ENCODE measurements at regions of chr20 and their contacts with region 1.

Region 1: DNA sequence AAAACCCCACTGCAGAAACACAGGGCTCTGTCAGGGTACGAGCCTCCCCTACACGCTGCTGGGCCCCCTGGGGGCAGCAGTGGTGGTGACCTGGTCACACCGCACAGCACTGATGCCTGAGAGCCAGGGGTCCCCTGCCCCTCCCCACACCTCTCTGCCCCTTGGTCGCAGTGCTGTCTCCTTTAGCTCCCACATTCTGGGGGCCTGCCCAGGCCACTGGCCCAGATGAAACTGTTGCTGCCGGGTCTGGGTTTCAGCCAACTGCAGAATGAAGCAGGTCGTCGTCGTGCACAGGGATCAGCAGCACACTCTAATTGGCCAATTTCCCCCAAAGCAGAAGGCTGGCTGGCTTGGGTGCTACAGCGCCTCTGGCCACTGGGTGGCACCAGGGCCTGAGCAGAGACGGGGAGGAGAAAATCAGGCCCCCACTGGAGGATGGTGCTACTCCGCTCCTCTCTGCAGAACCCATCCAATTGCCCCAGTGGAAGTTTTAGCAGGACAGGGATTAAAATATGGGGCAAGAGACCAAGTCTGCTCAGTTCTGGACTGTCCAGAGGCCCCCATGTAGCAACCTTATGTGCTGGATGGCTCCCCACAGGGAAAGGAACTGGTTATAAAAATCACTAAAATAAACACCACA is 26.1 kb downstream of the DIDO1 start:
- DNase-seq: peak; percentile 75
- H3K4me3 ChIP-seq: no peak overlapping the region
- H3K27ac ChIP-seq: peak overlapping the region; percentile 38
- H3K4me1 ChIP-seq: peaks cover 15% of the 10 kb centered on the region
- CTCF ChIP-seq: peak; percentile 84

Region 2: GRCh38 chr20:62437927-62438326 is 462.2 kb before region 1 on chr20:
- CTCF ChIA-PET with region 1: no interaction called
- POLR2A ChIA-PET with region 1: no interaction called
- intact Hi-C with region 1: no loop called
- DNase-seq: no peak
- H3K4me3 ChIP-seq: no peak overlapping the region
- H3K27ac ChIP-seq: no peak overlapping the region
- H3K4me1 ChIP-seq: no peaks in the 10 kb centered on the region
- CTCF ChIP-seq: no peak

Region 3: GRCh38 chr20:62822788-62823651 is 77.2 kb before region 1 on chr20:
- CTCF ChIA-PET with region 1: no interaction called
- POLR2A ChIA-PET with region 1: no interaction called
- intact Hi-C with region 1: loop called (anchors 2 kb)
- DNase-seq: peak; percentile 87
- H3K4me3 ChIP-seq: no peak overlapping the region
- H3K27ac ChIP-seq: no peak overlapping the region
- H3K4me1 ChIP-seq: peaks cover 7% of the 10 kb centered on the region
- CTCF ChIP-seq: peak; percentile 88

Region 4: GRCh38 chr20:62918831-62919230 is 18.7 kb after region 1 on chr20:
- CTCF ChIA-PET with region 1: no interaction called
- POLR2A ChIA-PET with region 1: interaction called, 5 read pairs
- intact Hi-C with region 1: loop called (anchors 1 kb)
- DNase-seq: peak; percentile 52
- H3K4me3 ChIP-seq: peak overlapping the region; percentile 48
- H3K27ac ChIP-seq: peak overlapping the region; percentile 61
- H3K4me1 ChIP-seq: peaks cover 86% of the 10 kb centered on the region
- CTCF ChIP-seq: no peak

Region 5: DNA sequence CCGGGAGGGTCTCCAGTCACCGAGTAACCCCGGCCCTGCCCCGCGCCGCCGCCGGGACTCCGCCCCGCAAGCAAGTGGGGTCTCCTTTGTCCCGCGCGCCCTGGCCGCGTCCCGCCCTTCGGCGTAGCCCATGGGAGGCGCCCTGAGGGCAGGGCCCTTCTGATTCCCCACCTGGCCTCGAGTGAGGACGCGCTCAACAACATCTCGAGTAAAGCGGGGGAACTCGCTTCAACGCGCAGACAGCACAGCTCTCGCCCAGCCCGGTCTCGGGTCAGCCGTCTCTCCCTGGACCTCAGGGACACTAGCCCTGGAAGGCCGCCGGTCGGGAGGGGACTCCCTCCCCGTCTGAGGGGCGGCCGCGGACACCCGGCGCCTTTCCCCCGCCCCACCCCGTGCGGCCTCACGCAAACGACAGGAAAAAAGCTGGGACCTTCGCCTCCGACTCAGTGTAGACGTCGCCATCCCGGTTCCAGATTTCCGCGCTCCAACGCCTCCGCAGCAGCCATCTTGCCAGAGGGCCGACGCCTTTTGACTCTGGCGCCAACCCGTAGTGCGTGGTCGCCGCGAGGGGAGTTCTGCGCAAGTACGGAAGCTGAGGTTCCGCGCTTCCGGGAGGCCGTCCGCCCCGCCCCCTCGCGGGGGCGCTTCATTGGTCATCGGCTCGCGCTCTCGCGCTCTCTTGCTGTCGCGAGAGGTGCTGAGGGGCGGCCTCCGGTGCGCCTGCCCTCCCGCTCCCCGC is 37.4 kb after region 1 on chr20:
- CTCF ChIA-PET with region 1: no interaction called
- POLR2A ChIA-PET with region 1: no interaction called
- intact Hi-C with region 1: loop called (anchors 2 kb)
- DNase-seq: peak; percentile 98
- H3K4me3 ChIP-seq: peak overlapping the region; percentile 82
- H3K27ac ChIP-seq: peak overlapping the region; percentile 63
- H3K4me1 ChIP-seq: peaks cover 48% of the 10 kb centered on the region
- CTCF ChIP-seq: no peak

Region 6: GRCh38 chr20:62972270-62973032 is 72.3 kb after region 1 on chr20:
- CTCF ChIA-PET with region 1: no interaction called
- POLR2A ChIA-PET with region 1: no interaction called
- intact Hi-C with region 1: loop called (anchors 1 kb)
- DNase-seq: peak; percentile 82
- H3K4me3 ChIP-seq: no peak overlapping the region
- H3K27ac ChIP-seq: no peak overlapping the region
- H3K4me1 ChIP-seq: peaks cover 4% of the 10 kb centered on the region
- CTCF ChIP-seq: peak; percentile 84

Region 7: DNA sequence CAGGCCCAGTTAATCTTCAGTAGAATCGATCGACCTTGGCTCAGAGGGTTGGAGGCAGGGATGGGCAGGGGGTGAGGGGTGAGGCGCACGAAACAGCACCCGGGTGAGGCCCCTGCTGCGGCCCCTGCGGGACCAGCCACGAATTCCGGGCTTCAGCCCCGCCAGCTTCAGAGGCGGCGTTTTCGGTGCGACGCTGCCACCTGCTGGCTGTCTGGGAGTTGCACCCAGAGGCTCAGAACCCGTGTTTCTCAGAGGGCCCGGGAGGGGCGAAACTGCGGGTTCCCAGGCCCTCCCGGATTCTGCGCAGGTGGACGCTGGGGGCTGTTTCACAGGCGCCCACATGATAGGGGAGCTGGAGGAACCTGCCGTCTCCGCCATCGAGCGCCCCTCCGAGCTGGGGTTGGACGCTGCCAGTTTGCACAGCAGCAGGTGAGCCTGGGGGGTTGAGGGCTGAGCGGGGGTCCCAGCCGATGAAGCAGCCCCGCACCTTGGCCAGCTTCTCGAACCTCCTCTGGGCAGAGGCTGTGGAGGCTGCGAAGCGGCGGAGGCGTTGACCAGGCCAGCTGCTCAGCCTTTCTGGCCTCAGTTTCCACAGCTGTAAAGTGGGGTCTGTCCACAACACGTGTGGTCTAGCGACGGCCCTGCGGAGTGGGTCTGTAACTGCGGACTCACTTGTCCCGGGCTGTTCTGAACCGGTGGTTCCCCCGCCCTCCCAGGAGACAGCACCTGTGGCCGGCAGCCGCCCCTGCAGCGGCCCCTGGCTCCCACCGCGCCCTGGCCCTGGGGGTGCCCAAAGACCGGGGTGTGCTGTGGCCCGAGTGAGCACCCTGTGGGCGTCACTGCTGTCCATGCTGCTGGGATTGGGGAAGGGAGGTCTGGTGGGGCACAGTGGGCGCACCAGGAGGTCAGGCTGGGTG is 109.1 kb after region 1 on chr20:
- CTCF ChIA-PET with region 1: no interaction called
- POLR2A ChIA-PET with region 1: no interaction called
- intact Hi-C with region 1: loop called (anchors 1 kb)
- DNase-seq: peak; percentile 75
- H3K4me3 ChIP-seq: no peak overlapping the region
- H3K27ac ChIP-seq: no peak overlapping the region
- H3K4me1 ChIP-seq: peaks cover 4% of the 10 kb centered on the region
- CTCF ChIP-seq: peak; percentile 94